Panc1 (cell line): ENCODE measurements at regions of chr9 and their contacts with region 1.

Region 1: GRCh38 chr9:136978073-136978864 is 965 bp downstream of the PTGDS start:
- DNase-seq: no peak
- ATAC-seq: peak; percentile 59
- H3K4me3 ChIP-seq: peak overlapping the region; percentile 51 to 54
- H3K27ac ChIP-seq: no peak overlapping the region
- H3K4me1 ChIP-seq: no peaks in the 10 kb centered on the region
- H3K27me3 ChIP-seq: no peaks in the 10 kb centered on the region
- CTCF ChIP-seq: no peak

Region 2: GRCh38 chr9:136740971-136741882 is 237.0 kb before region 1 on chr9:
- CTCF ChIA-PET with region 1: no interaction called
- POLR2A ChIA-PET with region 1: interaction called, 12 read pairs
- in situ Hi-C with region 1: no loop called
- intact Hi-C with region 1: no loop called
- DNase-seq: no peak
- ATAC-seq: no peak
- H3K4me3 ChIP-seq: no peak overlapping the region
- H3K27ac ChIP-seq: no peak overlapping the region
- H3K4me1 ChIP-seq: no peaks in the 10 kb centered on the region
- H3K27me3 ChIP-seq: no peaks in the 10 kb centered on the region
- CTCF ChIP-seq: no peak

Region 3: DNA sequence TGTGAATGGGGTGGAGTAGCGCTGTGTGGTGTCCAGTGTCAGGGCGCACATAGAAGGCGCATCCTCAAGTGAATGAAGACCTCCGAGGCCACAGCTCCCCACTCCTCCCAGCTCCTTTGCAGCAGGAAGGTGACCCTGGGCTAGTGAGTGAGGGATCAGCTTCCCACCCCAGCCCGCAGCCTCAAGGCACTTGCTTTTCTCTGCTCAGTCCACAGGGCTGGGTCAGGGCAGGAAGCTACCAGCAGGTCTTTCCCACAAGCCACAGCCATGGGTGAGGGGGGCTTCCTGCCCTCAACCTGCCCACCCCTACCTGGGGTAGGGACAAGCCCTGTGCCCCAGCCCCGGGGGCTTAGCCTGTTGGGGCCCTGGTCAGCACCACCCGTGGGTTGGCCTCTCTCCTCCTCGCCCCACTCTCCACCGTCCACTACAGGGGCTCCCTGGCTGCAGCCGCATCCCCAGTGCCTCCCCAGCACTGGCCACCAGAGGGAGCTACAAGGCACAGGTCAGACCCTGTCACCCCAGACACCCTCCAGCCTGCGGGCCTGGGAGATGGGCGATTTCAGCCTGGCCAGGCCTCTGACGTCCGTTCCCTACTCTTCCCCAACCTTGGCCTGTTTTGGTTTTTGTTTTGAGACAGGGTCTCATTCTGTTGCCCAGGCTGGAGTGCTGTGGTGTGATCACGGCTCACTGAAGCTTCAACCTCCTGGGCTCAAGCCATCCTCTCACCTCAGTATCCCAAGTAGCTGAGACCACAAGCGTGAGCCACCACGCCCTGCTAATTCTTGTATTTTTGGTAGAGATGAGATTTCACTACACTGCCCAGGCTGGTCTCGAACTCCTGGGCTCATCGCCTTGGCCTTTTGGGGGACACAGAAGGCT is 51.0 kb after region 1 on chr9:
- CTCF ChIA-PET with region 1: interaction called, 10 read pairs
- POLR2A ChIA-PET with region 1: no interaction called
- in situ Hi-C with region 1: no loop called
- intact Hi-C with region 1: no loop called
- DNase-seq: peak; percentile 25
- ATAC-seq: peak; percentile 80
- H3K4me3 ChIP-seq: peak overlapping the region in 1 of 2 experiments; percentile 53; a peak in 2 of 4 replicates
- H3K27ac ChIP-seq: no peak overlapping the region
- H3K4me1 ChIP-seq: peaks cover 22% of the 10 kb centered on the region; the same call in 1 of the 2 replicates
- H3K27me3 ChIP-seq: no peaks in the 10 kb centered on the region
- CTCF ChIP-seq: peak; percentile 92